ENCODE measurements at regions of chr17 and their contacts with region 1.

Region 1: DNA sequence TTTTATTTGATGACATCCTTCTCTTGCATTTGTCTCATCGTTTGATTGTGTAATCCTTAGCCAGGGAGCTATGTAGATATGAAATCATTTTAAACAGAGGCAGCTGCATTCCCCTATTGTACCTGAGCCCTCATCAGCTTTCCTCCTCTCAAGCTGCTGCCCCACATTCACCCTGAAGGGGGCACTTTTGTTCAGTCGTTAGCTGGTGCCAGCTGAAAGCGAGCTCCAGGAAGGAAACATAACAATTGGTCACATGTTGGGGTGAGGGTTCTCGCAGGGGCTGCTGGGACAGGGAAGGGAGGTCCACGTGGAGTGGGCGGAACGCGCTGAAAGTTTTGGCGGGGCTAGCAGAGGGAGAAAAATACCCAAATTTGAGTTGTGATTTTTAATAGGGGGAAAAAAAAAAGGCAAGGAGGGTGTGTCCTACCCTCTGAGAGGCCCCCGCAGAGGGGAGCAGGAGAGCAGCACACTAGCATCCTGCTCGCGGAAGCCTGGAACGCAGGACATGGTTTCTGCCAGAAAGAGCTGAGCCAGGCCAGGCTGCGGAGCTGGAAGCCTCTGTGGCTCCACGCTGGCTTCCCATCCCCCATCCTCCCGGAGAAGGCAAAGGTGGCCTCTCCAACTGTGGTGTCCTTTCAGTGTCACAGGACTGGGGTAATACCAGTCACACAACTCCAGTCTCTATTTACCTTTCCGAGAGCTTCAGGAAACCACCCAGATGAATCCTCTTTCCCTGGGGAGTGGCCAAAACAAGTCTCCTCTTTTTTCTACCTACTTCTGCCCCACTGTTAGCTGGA is 8.5 kb upstream of the MSL1 start:
- DNase-seq: peak; percentile 95
- ATAC-seq: peak; percentile 58
- H3K4me3 ChIP-seq: peak overlapping the region; percentile 24
- H3K27ac ChIP-seq: peak overlapping the region; percentile 90
- H3K4me1 ChIP-seq: peaks cover 36% of the 10 kb centered on the region
- H3K27me3 ChIP-seq: no peaks in the 10 kb centered on the region
- CTCF ChIP-seq: peak; percentile 94; the same call in 1 of the 2 replicates
- POLR2A ChIP-seq: no peak
- RAD21 ChIP-seq: peak; percentile 84

Region 2: DNA sequence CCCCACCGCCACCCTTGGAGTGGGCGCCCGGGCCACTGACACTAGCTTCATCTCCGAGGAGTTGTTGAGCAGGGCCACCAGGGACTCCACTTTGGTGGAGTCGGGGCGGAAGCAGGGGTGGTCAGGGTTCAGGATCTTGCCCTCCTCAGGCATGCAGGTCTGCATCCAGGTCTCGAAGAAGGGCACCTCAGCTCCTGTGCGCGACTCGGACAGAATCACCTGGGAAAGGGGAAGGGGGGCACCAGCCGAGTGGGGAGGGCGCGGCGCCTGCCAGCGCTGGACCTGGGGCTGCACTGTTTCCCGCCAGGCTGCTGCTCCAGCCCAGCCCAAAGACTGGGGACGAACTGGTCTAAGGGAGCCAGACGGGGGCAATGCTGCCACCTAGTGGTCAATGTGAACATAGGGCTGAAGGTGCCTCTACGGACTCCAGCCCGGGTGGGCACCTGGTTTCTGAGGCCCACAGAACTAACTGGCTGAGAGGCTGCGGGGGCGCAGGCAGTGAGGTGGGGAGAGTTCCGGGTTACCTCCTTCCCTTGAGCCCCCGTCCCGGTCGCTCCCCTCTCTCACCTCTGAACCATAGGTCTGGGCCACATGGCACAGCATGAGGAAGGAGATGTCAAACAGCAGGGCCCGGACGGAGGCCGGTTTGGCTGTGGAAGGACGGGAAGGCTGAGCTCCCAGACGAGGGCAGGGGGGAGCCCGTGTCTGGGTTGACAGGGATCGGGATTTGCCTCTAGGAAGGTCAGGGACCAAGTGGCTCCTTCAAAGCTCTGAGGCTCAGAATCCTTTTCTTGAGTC is 86.3 kb before region 1 on chr17:
- CTCF ChIA-PET with region 1: no interaction called
- POLR2A ChIA-PET with region 1: no interaction called
- dilution Hi-C with region 1: no loop called
- in situ Hi-C with region 1: no loop called
- intact Hi-C with region 1: no loop called
- DNase-seq: peak; percentile 70
- ATAC-seq: peak; percentile 97
- H3K4me3 ChIP-seq: no peak overlapping the region
- H3K27ac ChIP-seq: no peak overlapping the region
- H3K4me1 ChIP-seq: peaks cover 9% of the 10 kb centered on the region; the same call in 1 of the 2 replicates
- H3K27me3 ChIP-seq: no peaks in the 10 kb centered on the region
- CTCF ChIP-seq: peak; percentile 89
- POLR2A ChIP-seq: no peak
- RAD21 ChIP-seq: peak; percentile 82

Region 3: GRCh38 chr17:40038882-40039513 is 74.3 kb before region 1 on chr17:
- CTCF ChIA-PET with region 1: interaction called, 12 read pairs
- POLR2A ChIA-PET with region 1: no interaction called
- dilution Hi-C with region 1: no loop called
- in situ Hi-C with region 1: no loop called
- intact Hi-C with region 1: loop called (anchors 1 kb)
- DNase-seq: peak; percentile 87
- ATAC-seq: peak; percentile 90
- H3K4me3 ChIP-seq: no peak overlapping the region
- H3K27ac ChIP-seq: peak overlapping the region; percentile 1; the same call in 1 of the 2 replicates
- H3K4me1 ChIP-seq: peaks cover 1% of the 10 kb centered on the region; the same call in 1 of the 2 replicates
- H3K27me3 ChIP-seq: no peaks in the 10 kb centered on the region
- CTCF ChIP-seq: peak; percentile 93
- POLR2A ChIP-seq: no peak
- RAD21 ChIP-seq: peak; percentile 61

Region 4: DNA sequence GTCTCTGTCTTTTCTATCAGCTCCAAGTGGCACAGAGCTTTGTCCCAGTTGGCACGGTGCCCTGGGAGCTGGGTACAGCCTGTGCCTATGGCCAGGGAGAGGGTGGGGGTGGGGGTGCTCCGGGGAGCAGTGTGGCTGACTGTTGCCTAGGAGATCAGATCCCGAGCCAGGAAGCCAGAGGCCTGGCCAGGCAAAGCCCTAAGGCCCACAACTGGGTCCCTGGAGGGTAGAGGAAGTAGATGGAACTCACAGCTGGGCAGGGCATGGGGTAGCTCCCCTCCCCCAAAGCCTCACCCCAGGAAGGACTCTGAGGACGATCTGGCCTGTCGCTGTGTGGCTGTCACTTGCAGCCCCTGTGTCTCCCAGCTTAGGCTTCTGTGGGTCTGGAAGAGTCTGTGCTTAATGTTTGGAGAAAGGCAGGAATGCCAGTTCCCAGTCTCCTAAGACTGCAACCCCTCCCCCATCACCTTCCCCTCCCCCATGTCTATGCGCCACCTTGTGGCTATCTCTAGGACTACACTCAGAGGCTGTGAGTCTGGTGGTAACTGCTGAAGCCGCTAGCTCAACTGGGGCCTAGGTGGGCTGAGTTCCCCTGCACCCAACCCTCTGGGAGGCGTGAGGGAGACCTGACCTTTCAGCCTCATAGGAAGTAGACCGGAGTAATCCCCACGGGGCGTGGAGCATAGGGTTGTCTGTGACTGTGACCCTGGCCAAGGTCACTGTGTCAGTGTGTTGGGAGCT is 37.9 kb before region 1 on chr17:
- CTCF ChIA-PET with region 1: interaction called, 11 read pairs
- POLR2A ChIA-PET with region 1: no interaction called
- dilution Hi-C with region 1: no loop called
- in situ Hi-C with region 1: no loop called
- intact Hi-C with region 1: no loop called
- DNase-seq: peak; percentile 48
- ATAC-seq: peak; percentile 85
- H3K4me3 ChIP-seq: no peak overlapping the region
- H3K27ac ChIP-seq: peak overlapping the region; percentile 24; the same call in 1 of the 2 replicates
- H3K4me1 ChIP-seq: peaks cover 31% of the 10 kb centered on the region
- H3K27me3 ChIP-seq: no peaks in the 10 kb centered on the region
- CTCF ChIP-seq: peak; percentile 85
- POLR2A ChIP-seq: no peak
- RAD21 ChIP-seq: peak; percentile 67

Region 5: DNA sequence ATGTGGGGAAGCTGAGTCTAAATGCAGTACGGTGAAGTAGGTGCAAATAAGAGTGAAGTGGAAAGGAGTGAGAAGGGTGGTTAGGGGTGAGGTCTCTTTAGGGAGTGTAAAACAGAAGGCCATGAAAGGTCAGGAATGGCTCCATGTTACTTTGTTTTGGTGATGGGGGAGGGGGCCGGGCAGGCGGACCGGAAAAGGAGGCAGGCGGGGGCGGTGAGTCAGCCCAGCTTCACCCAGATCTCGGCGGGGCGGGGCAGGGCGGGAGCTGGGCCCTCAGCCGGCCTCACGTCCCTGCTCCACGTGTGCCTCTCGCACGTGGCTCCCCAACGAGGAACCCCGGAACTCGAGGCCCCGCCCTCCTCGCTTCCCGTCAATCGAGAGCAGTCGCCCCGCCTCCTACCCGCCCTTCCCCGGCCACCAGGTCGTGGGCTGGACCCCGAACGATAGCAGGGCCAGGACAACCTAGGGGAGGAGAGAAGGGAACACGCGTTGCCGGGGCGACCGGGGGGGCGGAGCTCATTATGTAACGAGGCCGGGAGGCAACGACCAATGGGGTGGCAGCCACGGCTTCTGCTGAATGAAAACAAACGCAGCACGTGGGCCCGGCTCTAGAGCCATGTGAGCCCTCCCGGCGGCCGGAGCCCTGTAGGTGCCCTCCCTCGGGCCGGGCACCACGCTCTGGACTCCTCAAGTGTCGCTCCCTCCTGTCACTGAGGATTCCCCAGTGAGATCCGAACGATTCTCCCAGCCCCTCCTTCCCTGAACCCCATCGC is 14.3 kb before region 1 on chr17:
- CTCF ChIA-PET with region 1: interaction called, 12 read pairs
- POLR2A ChIA-PET with region 1: interaction called, 3 read pairs
- dilution Hi-C with region 1: no loop called
- in situ Hi-C with region 1: no loop called
- intact Hi-C with region 1: loop called (anchors 1 kb)
- DNase-seq: peak; percentile 98
- ATAC-seq: peak; percentile 80
- H3K4me3 ChIP-seq: peak overlapping the region; percentile 65
- H3K27ac ChIP-seq: peak overlapping the region; percentile 91
- H3K4me1 ChIP-seq: peaks cover 22% of the 10 kb centered on the region
- H3K27me3 ChIP-seq: no peaks in the 10 kb centered on the region
- CTCF ChIP-seq: no peak
- POLR2A ChIP-seq: peak; percentile 81
- RAD21 ChIP-seq: no peak

Region 6: GRCh38 chr17:40168262-40168832 is 55.0 kb after region 1 on chr17:
- CTCF ChIA-PET with region 1: interaction called, 25 read pairs
- POLR2A ChIA-PET with region 1: no interaction called
- dilution Hi-C with region 1: no loop called
- in situ Hi-C with region 1: no loop called
- intact Hi-C with region 1: loop called (anchors 1 kb)
- DNase-seq: peak; percentile 69
- ATAC-seq: peak; percentile 96
- H3K4me3 ChIP-seq: no peak overlapping the region
- H3K27ac ChIP-seq: no peak overlapping the region
- H3K4me1 ChIP-seq: peaks cover 6% of the 10 kb centered on the region
- H3K27me3 ChIP-seq: no peaks in the 10 kb centered on the region
- CTCF ChIP-seq: peak; percentile 76
- POLR2A ChIP-seq: no peak
- RAD21 ChIP-seq: peak; percentile 76

Region 7: DNA sequence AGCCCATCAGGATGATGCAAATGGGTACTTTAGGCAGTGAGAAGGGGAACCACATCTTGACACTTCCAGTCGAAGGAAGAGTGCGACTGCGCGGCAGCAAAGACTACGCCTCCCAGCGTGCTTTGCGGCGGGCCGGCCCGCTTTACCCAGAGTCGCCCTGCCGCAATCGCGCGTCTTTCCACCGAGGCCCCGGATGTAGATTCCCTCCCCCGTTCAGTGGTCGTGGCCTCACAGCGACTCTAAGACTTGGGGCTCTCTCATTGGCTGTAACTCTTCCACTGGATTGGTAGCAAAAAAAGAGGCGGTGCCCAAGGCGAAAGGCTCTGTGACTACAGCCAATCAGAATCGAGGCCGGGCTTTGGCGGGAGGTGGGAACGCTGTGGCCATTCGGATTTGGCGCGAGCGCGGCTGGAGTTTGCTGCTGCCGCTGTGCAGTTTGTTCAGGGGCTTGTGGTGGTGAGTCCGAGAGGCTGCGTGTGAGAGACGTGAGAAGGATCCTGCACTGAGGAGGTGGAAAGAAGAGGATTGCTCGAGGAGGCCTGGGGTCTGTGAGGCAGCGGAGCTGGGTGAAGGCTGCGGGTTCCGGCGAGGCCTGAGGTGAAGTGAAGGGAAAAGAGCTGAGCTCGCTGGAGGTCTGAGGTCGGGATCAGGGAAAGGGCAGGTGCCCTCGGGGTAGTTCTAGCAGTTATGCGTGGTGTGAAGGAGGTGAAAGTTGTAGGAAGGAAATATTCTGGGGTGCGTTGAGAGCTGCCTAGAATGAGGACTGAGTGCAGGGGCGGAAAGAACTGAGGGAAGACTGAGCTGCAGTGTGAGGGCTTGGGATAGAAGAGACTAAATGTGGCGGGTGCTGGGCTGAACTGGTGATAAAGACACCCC is 174.4 kb after region 1 on chr17 and contains the start of gene CDC6:
- CTCF ChIA-PET with region 1: interaction called, 3 read pairs
- POLR2A ChIA-PET with region 1: no interaction called
- dilution Hi-C with region 1: no loop called
- in situ Hi-C with region 1: no loop called
- intact Hi-C with region 1: loop called (anchors 2 kb)
- DNase-seq: peak; percentile 99
- ATAC-seq: peak; percentile 88
- H3K4me3 ChIP-seq: peak within 1 kb of the TSS; percentile 66
- H3K27ac ChIP-seq: peak within 1 kb of the TSS; percentile 29
- H3K4me1 ChIP-seq: peaks cover 13% of the 10 kb centered on the region
- H3K27me3 ChIP-seq: no peaks in the 10 kb centered on the region
- CTCF ChIP-seq: no peak
- POLR2A ChIP-seq: peak; percentile 85
- RAD21 ChIP-seq: no peak
- total RNA-seq, gene CDC6: 25.6 and 27.8 TPM in 2 replicates

Region 8: GRCh38 chr17:40399185-40399584 is 285.9 kb after region 1 on chr17:
- CTCF ChIA-PET with region 1: no interaction called
- POLR2A ChIA-PET with region 1: no interaction called
- dilution Hi-C with region 1: no loop called
- in situ Hi-C with region 1: no loop called
- intact Hi-C with region 1: no loop called
- DNase-seq: peak; percentile 74
- ATAC-seq: peak; percentile 75
- H3K4me3 ChIP-seq: no peak overlapping the region
- H3K27ac ChIP-seq: no peak overlapping the region
- H3K4me1 ChIP-seq: no peaks in the 10 kb centered on the region
- H3K27me3 ChIP-seq: no peaks in the 10 kb centered on the region
- CTCF ChIP-seq: peak; percentile 65
- POLR2A ChIP-seq: no peak
- RAD21 ChIP-seq: peak; percentile 59

Measured in IMR-90 (cell line).